Mammary epithelial cell (primary cell): ENCODE measurements at regions of chr3 and their contacts with region 1.

Region 1: GRCh38 chr3:127822698-127823425 is 547 bp upstream of the MGLL start:
- DNase-seq: peak; percentile 32
- H3K4me3 ChIP-seq: peak overlapping the region; percentile 73 to 91 (median 77)
- H3K27ac ChIP-seq: peak overlapping the region; percentile 32
- H3K4me1 ChIP-seq: peaks cover 38% of the 10 kb centered on the region
- H3K27me3 ChIP-seq: no peaks in the 10 kb centered on the region
- CTCF ChIP-seq: no peak

Region 2: GRCh38 chr3:127750226-127751031 is 72.4 kb before region 1 on chr3:
- CTCF ChIA-PET with region 1: no interaction called
- dilution Hi-C with region 1: no loop called
- in situ Hi-C with region 1: no loop called
- intact Hi-C with region 1: loop called (anchors 2 kb)
- DNase-seq: peak; percentile 98
- H3K4me3 ChIP-seq: no peak overlapping the region
- H3K27ac ChIP-seq: peak overlapping the region; percentile 70
- H3K4me1 ChIP-seq: peaks cover 47% of the 10 kb centered on the region
- H3K27me3 ChIP-seq: no peaks in the 10 kb centered on the region
- CTCF ChIP-seq: no peak

Region 3: DNA sequence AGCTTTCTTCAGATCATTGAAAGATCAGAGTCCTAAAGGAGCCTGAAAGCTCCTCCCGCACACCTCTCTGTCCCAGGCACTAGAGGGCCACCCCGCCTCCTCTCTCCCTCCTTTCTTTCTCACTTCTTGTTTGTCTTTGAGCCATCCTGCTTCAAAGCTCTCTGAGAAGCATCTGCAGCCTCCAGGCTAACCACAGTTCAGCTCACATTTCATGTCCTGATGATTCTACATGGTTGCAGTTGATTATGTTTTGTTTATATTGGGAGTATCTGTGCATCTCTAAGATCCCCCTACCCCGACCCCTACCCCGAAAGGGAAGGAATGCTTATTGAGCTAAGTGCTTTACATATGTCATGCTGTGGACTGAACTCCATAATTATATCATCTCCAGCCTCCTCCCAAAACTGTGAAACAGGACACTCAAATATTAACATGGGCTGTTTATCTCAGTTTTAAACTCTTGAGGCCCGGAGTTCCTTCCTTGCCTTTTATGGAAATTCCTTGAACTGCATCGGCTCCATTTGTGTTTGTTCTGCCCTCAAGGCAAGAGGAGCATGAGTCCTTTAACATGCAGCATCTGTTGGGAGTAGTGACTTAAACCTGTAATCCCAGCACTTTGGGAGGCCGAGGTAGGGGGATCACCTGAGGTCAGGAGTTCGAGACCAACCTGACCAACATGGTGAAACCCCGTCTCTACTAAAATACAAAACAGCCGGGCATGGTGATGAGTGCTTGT is 31.5 kb before region 1 on chr3:
- CTCF ChIA-PET with region 1: no interaction called
- dilution Hi-C with region 1: no loop called
- in situ Hi-C with region 1: no loop called
- intact Hi-C with region 1: loop called (anchors 2 kb)
- DNase-seq: peak; percentile 51
- H3K4me3 ChIP-seq: no peak overlapping the region
- H3K27ac ChIP-seq: no peak overlapping the region
- H3K4me1 ChIP-seq: peaks cover 10% of the 10 kb centered on the region
- H3K27me3 ChIP-seq: no peaks in the 10 kb centered on the region
- CTCF ChIP-seq: peak; percentile 23 to 42

Region 4: DNA sequence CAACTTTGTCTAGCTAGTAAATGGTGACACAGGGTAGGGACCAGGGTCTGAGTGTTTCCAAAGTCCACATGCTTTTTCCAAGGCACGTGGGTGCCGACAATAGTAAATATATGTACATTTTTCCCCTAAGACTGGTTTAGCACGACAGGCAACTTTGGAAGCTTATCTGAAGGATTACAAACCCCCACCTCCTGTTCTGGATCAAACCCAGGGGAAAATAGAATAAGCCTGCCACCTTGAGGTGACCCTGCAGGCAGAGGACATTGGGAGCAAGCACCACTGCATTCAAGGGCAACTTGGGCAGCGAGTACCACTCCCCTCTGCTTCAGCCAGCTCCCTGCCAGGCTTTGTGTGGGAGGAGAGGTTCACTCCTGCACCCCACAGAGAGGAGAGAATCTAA is 137.0 kb after region 1 on chr3:
- CTCF ChIA-PET with region 1: no interaction called
- dilution Hi-C with region 1: no loop called
- in situ Hi-C with region 1: no loop called
- intact Hi-C with region 1: loop called (anchors 2 kb)
- DNase-seq: no peak
- H3K4me3 ChIP-seq: no peak overlapping the region
- H3K27ac ChIP-seq: no peak overlapping the region
- H3K4me1 ChIP-seq: peaks cover 20% of the 10 kb centered on the region
- H3K27me3 ChIP-seq: no peaks in the 10 kb centered on the region
- CTCF ChIP-seq: peak; percentile 10 to 44